Right lobe of liver (tissue), 6 donors: ENCODE measurements at regions of chr5 and their contacts with region 1.

Region 1: DNA sequence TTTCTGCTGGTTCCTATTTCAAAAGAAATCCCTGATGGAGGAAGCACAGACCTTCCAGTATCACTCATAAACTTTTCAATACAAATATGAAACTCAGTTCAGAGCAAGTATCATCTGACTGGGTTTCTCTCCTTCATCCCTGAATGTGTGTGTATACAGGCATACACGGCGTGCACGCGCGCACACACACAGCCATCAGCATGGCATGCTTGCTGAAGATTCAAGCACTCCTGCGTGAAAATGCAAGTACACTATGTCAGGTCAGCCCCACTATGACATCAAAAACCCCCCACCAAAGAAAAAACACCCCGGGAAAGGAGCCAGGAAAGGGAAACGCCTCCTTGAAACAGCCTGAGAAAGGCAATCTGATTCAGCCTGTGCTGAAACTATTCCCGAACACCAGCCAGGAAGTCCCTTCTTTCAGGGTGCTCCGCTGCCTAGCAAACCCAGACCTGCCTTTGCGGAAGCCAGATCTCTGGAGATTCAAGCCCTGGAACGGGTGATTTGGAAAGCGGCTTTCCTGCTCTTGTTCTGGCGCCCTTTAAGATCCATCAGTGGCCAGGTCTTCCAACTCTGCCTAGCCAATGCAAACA is 831 bp downstream of the KLHL3 start:
- DNase-seq: peak; percentile 26 to 51 (median 50)
- ATAC-seq: peak; percentile 35 to 51 (median 45)
- H3K4me3 ChIP-seq: peak overlapping the region; percentile 23 to 60 (median 48)
- H3K27ac ChIP-seq: peak overlapping the region in 2 of 3 donors; percentile 67
- H3K4me1 ChIP-seq: peaks cover 0 to 45% (median 4%) of the 10 kb centered on the region in 4 donors
- H3K27me3 ChIP-seq: no peaks in the 10 kb centered on the region
- CTCF ChIP-seq: no peak
- POLR2A ChIP-seq: no peak

Region 2: DNA sequence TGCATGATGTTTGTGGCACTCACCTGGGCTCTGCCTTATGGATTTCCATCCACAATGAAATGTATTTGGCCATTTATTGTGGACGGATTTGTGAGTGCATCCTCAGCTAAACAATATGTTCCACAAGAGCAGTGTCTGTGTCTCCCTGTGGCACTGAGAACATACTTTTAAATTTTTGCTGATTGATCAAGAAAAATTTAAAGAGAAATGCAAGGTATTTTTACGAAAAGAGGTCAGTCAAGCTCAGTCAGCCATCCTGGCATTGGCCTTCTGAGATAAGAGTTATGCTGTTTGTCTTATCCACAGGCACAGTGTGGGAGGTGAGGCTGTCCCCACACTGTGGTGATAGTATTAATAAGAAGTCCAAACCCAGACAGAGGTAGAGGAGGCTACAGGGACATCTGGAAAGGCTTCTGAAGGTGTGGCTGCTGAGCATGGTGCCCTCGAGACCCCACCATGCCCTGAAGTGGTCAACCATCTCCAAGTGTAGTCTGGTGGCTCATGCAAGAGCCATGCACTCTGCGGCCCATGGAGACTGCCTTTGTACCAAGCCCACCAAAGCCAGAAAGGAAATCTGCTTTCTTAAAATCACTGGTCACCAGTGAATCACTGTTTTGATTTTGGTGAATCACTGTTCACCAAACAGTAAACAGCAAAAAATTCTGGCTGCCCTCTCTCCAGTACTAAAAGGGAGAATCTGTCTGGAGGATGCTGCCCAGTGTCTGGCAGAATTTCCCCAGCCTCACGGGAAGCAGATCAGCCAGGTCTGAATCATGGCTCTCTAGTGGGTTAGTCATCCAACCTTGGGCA is 264.7 kb before region 1 on chr5:
- intact Hi-C with region 1: no loop called
- DNase-seq: no peak
- ATAC-seq: no peak
- H3K4me3 ChIP-seq: no peak overlapping the region
- H3K27ac ChIP-seq: no peak overlapping the region
- H3K4me1 ChIP-seq: no peaks in the 10 kb centered on the region
- H3K27me3 ChIP-seq: no peaks in the 10 kb centered on the region
- CTCF ChIP-seq: no peak
- POLR2A ChIP-seq: no peak

Region 3: GRCh38 chr5:137641148-137641547 is 93.9 kb before region 1 on chr5:
- intact Hi-C with region 1: no loop called
- DNase-seq: no peak
- ATAC-seq: peak in 1 of 4 donors; percentile 32
- H3K4me3 ChIP-seq: no peak overlapping the region
- H3K27ac ChIP-seq: no peak overlapping the region
- H3K4me1 ChIP-seq: no peaks in the 10 kb centered on the region
- H3K27me3 ChIP-seq: no peaks in the 10 kb centered on the region
- CTCF ChIP-seq: no peak
- POLR2A ChIP-seq: no peak

Region 4: DNA sequence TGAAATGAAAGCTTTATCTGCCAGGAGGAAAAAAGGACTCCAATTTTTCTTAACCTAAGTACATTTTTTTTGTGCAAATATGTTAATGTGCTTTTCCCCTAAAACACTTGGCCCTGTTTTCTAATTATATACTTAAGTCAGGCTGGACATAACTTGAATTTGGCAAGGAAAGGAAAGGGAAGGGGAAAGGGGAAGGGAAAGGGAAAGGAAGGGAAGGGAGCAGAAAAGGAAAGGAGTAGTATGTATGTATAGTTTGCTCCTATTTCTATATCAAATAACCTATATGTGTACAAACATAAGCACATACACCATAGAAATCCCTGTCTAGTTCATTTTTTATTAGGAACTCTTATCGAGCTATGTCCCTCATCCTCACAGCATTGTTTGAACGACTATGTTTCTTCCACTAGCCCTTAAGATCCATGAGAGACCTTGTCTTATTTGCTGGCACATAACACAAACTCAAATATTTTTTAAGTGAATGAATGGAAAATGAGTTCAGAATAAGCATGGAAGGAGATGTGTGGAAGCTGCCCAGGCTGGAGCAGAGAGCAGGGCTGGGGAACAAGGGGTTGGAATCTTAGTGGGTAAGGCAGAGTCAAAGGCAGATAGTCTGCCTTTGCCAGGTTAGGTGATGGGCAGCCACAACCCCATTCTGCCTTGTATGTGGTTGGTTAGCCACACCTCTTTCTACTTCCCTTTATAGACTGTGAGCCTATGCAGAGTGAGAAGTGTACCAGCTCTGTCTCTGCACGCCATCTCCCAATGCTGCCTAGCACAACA is 69.2 kb before region 1 on chr5:
- intact Hi-C with region 1: loop called in 1 of 2 experiments (anchors 5 kb)
- DNase-seq: no peak
- ATAC-seq: peak; percentile 43 to 68 (median 64)
- H3K4me3 ChIP-seq: no peak overlapping the region
- H3K27ac ChIP-seq: peak overlapping the region in 2 of 3 donors; percentile 64 to 80
- H3K4me1 ChIP-seq: peaks cover 0 to 35% (median 1%) of the 10 kb centered on the region in 4 donors
- H3K27me3 ChIP-seq: no peaks in the 10 kb centered on the region
- CTCF ChIP-seq: no peak
- POLR2A ChIP-seq: no peak

Region 5: GRCh38 chr5:137675891-137676290 is 59.2 kb before region 1 on chr5:
- intact Hi-C with region 1: no loop called
- DNase-seq: no peak
- ATAC-seq: no peak
- H3K4me3 ChIP-seq: no peak overlapping the region
- H3K27ac ChIP-seq: no peak overlapping the region
- H3K4me1 ChIP-seq: peaks cover 0 to 4% (median 0%) of the 10 kb centered on the region in 4 donors
- H3K27me3 ChIP-seq: no peaks in the 10 kb centered on the region
- CTCF ChIP-seq: no peak
- POLR2A ChIP-seq: no peak